T-cell (primary cell): ENCODE measurements at regions of chr5 and their contacts with region 1.

Region 1: DNA sequence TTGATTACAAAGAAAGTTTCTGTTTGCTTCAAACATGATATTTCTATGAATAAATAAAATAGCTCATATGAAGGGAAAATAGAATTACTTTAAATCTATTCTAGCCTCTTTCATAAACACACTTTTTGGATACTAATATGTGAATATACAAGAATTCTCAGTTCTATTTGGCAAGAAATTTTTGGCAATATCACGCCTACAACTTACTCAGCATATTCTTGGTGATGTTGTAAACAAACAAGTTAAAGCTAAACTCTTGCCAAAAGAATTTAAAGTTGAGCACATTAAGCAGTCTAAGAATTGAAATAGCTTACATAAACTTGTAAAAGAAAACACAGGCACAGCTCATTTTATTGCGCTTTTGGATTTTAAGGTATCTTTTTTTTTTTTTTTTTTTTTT is 209.8 kb downstream of the CDH12 start:
- DNase-seq: no peak
- ATAC-seq: no peak
- H3K4me3 ChIP-seq: no peak overlapping the region
- H3K4me3 Mint-ChIP-seq: no peak overlapping the region
- H3K27ac ChIP-seq: no peak overlapping the region
- H3K27ac Mint-ChIP-seq: no peak overlapping the region
- H3K4me1 ChIP-seq: no peaks in the 10 kb centered on the region
- H3K4me1 Mint-ChIP-seq: no peaks in the 10 kb centered on the region
- H3K27me3 ChIP-seq: no peaks in the 10 kb centered on the region
- H3K27me3 Mint-ChIP-seq: no peaks in the 10 kb centered on the region

Region 2: DNA sequence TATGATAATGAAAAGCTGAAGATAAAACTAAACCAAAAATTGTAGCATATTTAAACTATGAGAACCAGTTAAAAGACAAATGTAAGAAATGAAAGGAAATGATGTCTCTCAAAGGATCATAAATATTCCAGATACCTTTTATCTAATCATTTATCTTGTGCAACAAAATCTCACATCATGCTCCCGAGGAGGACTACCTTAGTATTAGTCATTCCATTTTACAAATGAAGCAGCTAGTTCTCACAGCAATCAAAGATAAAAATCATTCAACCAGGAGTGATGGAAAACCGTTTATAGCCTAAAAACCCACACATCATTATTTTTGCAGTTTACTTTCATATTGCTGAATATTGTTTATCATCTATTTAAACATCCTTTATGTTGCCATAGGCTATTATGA is 19.8 kb after region 1 on chr5:
- CTCF ChIA-PET with region 1: interaction called in 1 of 2 experiments, 18 read pairs
- POLR2A ChIA-PET with region 1: no interaction called
- DNase-seq: no peak
- ATAC-seq: no peak
- H3K4me3 ChIP-seq: no peak overlapping the region
- H3K4me3 Mint-ChIP-seq: no peak overlapping the region
- H3K27ac ChIP-seq: no peak overlapping the region
- H3K27ac Mint-ChIP-seq: no peak overlapping the region
- H3K4me1 ChIP-seq: no peaks in the 10 kb centered on the region
- H3K4me1 Mint-ChIP-seq: no peaks in the 10 kb centered on the region
- H3K27me3 ChIP-seq: no peaks in the 10 kb centered on the region
- H3K27me3 Mint-ChIP-seq: no peaks in the 10 kb centered on the region